CD8-positive, alpha-beta T cell (primary cell): ENCODE measurements at regions of chr2 and their contacts with region 1.

Region 1: GRCh38 chr2:30421604-30422443 is 25.2 kb upstream of the LCLAT1 start:
- DNase-seq: peak in 6 of 9 experiments; percentile 27 to 81 (median 57)
- ATAC-seq: peak; percentile 45
- H3K4me3 ChIP-seq: peak overlapping the region in 1 of 2 experiments; percentile 26
- H3K4me3 Mint-ChIP-seq: peak overlapping the region; percentile 53
- H3K27ac ChIP-seq: peak overlapping the region; percentile 60 to 70
- H3K27ac Mint-ChIP-seq: peak overlapping the region; percentile 95
- H3K4me1 ChIP-seq: peaks cover 54% of the 10 kb centered on the region
- H3K4me1 Mint-ChIP-seq: peaks cover 51% of the 10 kb centered on the region
- H3K27me3 ChIP-seq: no peaks in the 10 kb centered on the region
- H3K27me3 Mint-ChIP-seq: no peaks in the 10 kb centered on the region
- CTCF ChIP-seq: no peak

Region 2: GRCh38 chr2:29657674-29658073 is 764.1 kb before region 1 on chr2:
- CTCF ChIA-PET with region 1: no interaction called
- POLR2A ChIA-PET with region 1: no interaction called
- intact Hi-C with region 1: no loop called
- DNase-seq: no peak
- ATAC-seq: no peak
- H3K4me3 ChIP-seq: no peak overlapping the region
- H3K4me3 Mint-ChIP-seq: no peak overlapping the region
- H3K27ac ChIP-seq: no peak overlapping the region
- H3K27ac Mint-ChIP-seq: no peak overlapping the region
- H3K4me1 ChIP-seq: no peaks in the 10 kb centered on the region
- H3K4me1 Mint-ChIP-seq: no peaks in the 10 kb centered on the region
- H3K27me3 ChIP-seq: no peaks in the 10 kb centered on the region
- H3K27me3 Mint-ChIP-seq: peaks cover 16% of the 10 kb centered on the region
- CTCF ChIP-seq: no peak

Region 3: DNA sequence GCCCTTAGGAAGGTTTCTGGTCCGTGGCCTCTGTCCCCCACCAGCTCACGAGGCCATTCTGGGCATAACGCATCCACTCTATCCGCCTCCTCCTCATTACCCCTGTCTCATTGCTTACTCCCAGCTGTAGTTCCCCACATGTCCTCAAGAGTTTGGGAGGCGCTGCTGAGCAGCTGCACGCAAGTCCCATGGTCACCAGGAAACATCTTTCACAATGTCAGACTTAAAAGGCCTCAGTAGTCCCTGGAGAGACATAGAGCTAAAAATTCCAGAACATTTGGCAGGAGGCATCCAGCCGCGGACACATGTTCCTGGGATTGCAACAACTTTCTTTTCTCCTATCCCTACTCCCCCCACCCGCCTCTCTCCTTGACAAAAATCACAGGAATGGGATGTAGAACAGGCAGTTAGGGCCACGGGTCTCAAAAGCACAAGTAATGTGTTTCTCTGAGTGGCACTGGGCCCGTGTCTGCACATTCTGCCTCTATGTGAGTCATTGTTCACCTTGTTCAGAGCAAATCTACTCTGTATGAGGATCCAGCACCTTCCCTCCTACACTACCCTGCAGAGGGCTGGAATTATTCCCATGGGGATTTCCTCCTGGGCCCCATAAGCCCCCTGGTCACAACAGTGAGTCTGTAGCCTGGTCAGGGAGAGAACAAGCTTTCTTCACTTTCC is 182.4 kb before region 1 on chr2:
- CTCF ChIA-PET with region 1: interaction called, 7 read pairs
- POLR2A ChIA-PET with region 1: interaction called, 10 read pairs
- intact Hi-C with region 1: loop called in 1 of 2 experiments (anchors 5 kb)
- DNase-seq: peak; percentile 48 to 91 (median 79)
- ATAC-seq: peak; percentile 73
- H3K4me3 ChIP-seq: peak overlapping the region; percentile 11 to 39
- H3K4me3 Mint-ChIP-seq: peak overlapping the region; percentile 94
- H3K27ac ChIP-seq: peak overlapping the region; percentile 24 to 60
- H3K27ac Mint-ChIP-seq: peak overlapping the region; percentile 96
- H3K4me1 ChIP-seq: peaks cover 90% of the 10 kb centered on the region
- H3K4me1 Mint-ChIP-seq: peaks cover 88% of the 10 kb centered on the region
- H3K27me3 ChIP-seq: no peaks in the 10 kb centered on the region
- H3K27me3 Mint-ChIP-seq: no peaks in the 10 kb centered on the region
- CTCF ChIP-seq: peak; percentile 95

Region 4: DNA sequence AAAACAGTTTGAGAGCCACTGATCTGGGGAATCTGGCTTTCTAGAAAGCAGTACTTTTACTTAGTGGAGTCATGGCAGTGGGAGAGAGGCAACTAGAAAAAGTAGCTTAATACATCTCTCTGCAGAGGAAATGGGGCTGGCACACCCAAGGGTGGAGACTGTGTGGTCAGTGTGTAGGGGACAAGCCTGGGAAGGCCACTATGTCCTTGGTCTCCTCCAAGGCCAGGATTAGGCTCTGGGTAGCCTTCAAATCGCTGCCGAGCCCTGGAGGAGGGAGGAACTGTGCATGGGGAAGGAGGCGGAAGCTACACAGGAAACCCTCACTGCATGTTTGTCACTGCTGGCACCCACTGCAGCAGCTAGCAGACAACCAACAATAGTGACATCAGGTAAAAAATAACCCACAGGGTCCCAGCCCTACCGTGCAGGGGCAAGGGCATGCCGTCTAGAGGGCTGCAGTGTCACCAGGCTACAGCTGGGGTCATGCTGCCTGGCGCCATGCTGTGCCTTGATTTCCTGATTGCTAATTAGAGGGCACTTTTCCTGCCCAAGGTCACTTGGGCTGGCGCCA is 155.7 kb before region 1 on chr2:
- CTCF ChIA-PET with region 1: no interaction called
- POLR2A ChIA-PET with region 1: no interaction called
- intact Hi-C with region 1: loop called in 1 of 2 experiments (anchors 5 kb)
- DNase-seq: peak; percentile 49 to 89 (median 71)
- ATAC-seq: peak; percentile 90
- H3K4me3 ChIP-seq: peak overlapping the region; percentile 31 to 40
- H3K4me3 Mint-ChIP-seq: peak overlapping the region; percentile 82
- H3K27ac ChIP-seq: peak overlapping the region; percentile 72 to 87
- H3K27ac Mint-ChIP-seq: peak overlapping the region; percentile 98
- H3K4me1 ChIP-seq: peaks cover 69% of the 10 kb centered on the region
- H3K4me1 Mint-ChIP-seq: peaks cover 85% of the 10 kb centered on the region
- H3K27me3 ChIP-seq: no peaks in the 10 kb centered on the region
- H3K27me3 Mint-ChIP-seq: no peaks in the 10 kb centered on the region
- CTCF ChIP-seq: no peak

Region 5: DNA sequence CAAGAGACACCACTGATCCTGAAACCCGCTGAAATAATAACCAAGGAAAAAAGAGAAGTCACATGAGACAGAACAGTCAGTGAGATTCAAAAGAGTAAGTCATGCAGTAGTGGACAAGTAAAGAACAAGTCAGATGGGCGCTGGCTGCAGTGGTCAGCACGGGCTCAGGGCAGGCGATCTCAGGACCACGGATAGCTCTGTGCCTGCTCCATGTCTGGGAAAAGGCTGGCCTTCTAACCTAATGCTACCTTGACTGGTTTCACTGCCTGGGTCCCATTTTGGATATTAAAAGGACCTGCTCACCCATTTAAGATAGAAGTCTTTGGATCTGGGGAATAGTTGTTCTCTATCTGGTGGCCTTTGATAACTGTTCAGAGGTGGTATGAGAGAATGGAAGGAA is 36.5 kb before region 1 on chr2:
- CTCF ChIA-PET with region 1: no interaction called
- POLR2A ChIA-PET with region 1: no interaction called
- intact Hi-C with region 1: loop called in 1 of 2 experiments (anchors 5 kb)
- DNase-seq: no peak
- ATAC-seq: no peak
- H3K4me3 ChIP-seq: no peak overlapping the region
- H3K4me3 Mint-ChIP-seq: no peak overlapping the region
- H3K27ac ChIP-seq: no peak overlapping the region
- H3K27ac Mint-ChIP-seq: no peak overlapping the region
- H3K4me1 ChIP-seq: peaks cover 3% of the 10 kb centered on the region
- H3K4me1 Mint-ChIP-seq: peaks cover 9% of the 10 kb centered on the region
- H3K27me3 ChIP-seq: no peaks in the 10 kb centered on the region
- H3K27me3 Mint-ChIP-seq: no peaks in the 10 kb centered on the region
- CTCF ChIP-seq: no peak